ENCODE measurements at regions of chr13 and their contacts with region 1.

Region 1: GRCh38 chr13:27613628-27614027 is 6.7 kb downstream of the LNX2 start:
- DNase-seq: no peak
- ATAC-seq: no peak
- H3K4me3 Mint-ChIP-seq: no peak overlapping the region
- H3K27ac Mint-ChIP-seq: no peak overlapping the region
- H3K4me1 Mint-ChIP-seq: peaks cover 34% of the 10 kb centered on the region
- H3K27me3 Mint-ChIP-seq: no peaks in the 10 kb centered on the region

Region 2: GRCh38 chr13:27496536-27497273 is 116.9 kb before region 1 on chr13:
- CTCF ChIA-PET with region 1: no interaction called
- POLR2A ChIA-PET with region 1: no interaction called
- intact Hi-C with region 1: no loop called
- DNase-seq: no peak
- ATAC-seq: no peak
- H3K4me3 Mint-ChIP-seq: no peak overlapping the region
- H3K27ac Mint-ChIP-seq: no peak overlapping the region
- H3K4me1 Mint-ChIP-seq: no peaks in the 10 kb centered on the region
- H3K27me3 Mint-ChIP-seq: no peaks in the 10 kb centered on the region

Region 3: GRCh38 chr13:27573265-27573664 is 40.4 kb before region 1 on chr13:
- CTCF ChIA-PET with region 1: interaction called, 3 read pairs
- POLR2A ChIA-PET with region 1: no interaction called
- intact Hi-C with region 1: loop called in 1 of 2 experiments (anchors 5 kb)
- DNase-seq: no peak
- ATAC-seq: peak; percentile 26
- H3K4me3 Mint-ChIP-seq: no peak overlapping the region
- H3K27ac Mint-ChIP-seq: no peak overlapping the region
- H3K4me1 Mint-ChIP-seq: peaks cover 5% of the 10 kb centered on the region
- H3K27me3 Mint-ChIP-seq: no peaks in the 10 kb centered on the region

Region 4: DNA sequence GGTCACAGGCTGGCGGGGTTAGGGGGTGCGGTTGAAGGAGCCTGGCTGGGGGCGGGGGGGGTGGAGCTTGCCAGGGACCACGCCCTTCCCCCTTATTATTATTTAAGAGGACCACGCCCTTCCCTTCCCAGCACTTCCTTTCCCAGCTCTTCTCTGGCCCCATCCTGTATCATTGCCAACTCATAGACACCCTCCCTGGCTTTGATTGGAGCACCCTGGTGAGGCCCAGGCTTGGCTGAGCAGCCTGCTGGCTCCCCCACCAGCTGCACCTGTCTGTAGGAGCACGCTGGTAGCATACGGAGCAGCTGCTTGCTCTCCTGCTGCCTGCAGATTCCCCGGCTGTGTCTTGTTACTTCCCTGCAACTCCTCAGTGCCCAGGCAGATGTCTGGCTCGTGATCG is 243.7 kb after region 1 on chr13:
- CTCF ChIA-PET with region 1: no interaction called
- POLR2A ChIA-PET with region 1: no interaction called
- intact Hi-C with region 1: no loop called
- DNase-seq: no peak
- ATAC-seq: no peak
- H3K4me3 Mint-ChIP-seq: no peak overlapping the region
- H3K27ac Mint-ChIP-seq: no peak overlapping the region
- H3K4me1 Mint-ChIP-seq: no peaks in the 10 kb centered on the region
- H3K27me3 Mint-ChIP-seq: peaks cover 21% of the 10 kb centered on the region